ENCODE measurements at regions of chr14 and their contacts with region 1.

Region 1: DNA sequence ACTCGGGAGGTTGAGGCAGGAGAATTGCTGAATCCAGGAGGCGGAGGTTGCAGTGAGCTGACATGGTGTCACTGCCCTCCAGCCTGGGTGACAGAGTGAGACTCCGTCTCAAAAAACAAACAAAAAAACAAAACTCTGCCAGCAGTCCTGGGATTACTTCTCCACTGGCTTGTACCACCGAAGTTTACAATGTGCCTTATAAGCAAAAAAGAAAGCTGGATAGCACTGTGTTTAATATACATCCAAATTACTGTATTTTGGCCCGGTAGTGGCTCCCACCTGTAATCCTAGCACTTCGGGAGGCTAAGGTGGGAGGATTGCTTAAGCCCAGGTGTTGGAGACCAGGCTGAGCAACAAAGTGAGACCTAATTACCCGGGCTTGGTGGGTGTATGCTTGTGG is 16.7 kb downstream of the HOMEZ start:
- DNase-seq: no peak
- ATAC-seq: no peak
- H3K4me3 ChIP-seq: no peak overlapping the region
- H3K27ac ChIP-seq: no peak overlapping the region
- H3K4me1 ChIP-seq: no peaks in the 10 kb centered on the region
- H3K27me3 ChIP-seq: peaks cover 5% of the 10 kb centered on the region; the same call in 1 of the 2 replicates
- CTCF ChIP-seq: no peak

Region 2: DNA sequence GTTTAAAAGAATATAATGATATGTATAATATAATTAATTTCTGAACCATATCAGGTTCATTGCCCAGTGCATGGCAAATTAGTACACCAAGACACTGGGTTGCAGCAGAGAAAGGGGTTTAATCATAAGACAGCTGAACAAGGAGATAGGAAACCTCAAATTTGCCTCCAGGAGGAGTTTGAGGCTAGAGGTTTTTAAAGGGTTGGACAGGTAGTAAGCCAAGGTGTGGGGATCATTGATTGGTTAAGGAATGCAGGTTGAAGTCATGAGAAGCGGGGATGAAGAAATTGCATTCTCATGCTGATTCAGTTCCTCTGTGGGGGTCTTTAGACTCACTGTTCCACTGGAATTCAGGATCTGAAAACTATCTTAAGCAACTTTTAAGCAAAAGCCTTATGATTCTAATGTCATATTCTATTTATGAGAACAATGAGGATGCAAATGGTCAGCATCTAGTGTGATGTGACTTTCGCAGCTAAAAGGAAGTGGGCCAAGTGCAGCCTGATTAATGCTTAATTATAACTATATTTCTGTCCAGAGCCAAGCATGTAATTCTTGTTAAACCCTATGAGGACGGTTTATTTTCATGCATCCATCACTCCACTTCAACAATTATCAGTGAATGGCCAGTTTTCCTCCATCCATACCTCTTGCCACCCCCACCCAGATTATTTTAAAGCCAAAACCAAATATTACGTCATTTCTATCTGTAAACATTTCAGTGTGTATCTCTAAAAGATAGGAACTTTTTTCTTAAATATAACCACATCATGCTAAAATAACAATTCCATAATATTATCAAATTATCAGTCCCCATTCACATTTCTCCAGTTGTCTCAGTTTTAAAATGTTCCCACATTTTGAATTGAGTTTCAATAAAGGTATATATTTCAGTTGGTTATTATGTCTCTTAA is 16.5 kb before region 1 on chr14:
- CTCF ChIA-PET with region 1: no interaction called
- POLR2A ChIA-PET with region 1: no interaction called
- in situ Hi-C with region 1: no loop called
- intact Hi-C with region 1: loop called (anchors 1 kb)
- DNase-seq: no peak
- ATAC-seq: no peak
- H3K4me3 ChIP-seq: no peak overlapping the region
- H3K27ac ChIP-seq: no peak overlapping the region
- H3K4me1 ChIP-seq: no peaks in the 10 kb centered on the region
- H3K27me3 ChIP-seq: peaks cover 5% of the 10 kb centered on the region; the same call in 1 of the 2 replicates
- CTCF ChIP-seq: no peak

Region 3: DNA sequence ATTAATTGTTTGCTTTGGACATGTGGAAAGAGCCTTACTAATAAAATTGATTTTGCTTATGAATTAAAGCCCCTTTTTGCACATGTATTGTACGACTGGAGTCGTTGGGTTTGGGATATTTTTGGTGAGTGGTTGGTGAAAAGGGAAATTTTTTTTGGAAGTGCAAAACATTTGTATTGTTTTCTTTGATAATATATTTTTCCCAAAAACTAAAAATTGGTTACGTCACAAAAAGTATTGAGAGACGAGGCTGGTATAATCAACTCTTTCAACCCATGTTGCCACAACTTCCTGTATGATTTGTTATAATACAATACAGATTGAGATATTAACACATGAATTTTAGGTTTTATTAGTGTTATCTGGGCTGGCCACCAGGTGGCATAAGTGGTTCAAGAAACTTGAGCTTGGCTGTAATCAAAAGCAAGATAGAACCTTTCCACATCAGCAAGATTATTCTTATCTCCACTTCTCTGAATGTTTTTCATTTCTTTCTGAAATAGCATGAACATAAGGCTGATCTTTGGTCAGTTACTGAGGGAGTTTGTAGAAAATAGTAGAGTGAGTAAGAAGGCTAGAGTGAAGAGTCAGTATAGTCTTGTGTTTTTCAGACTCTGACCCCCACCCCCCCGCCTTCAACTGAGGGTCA is 209.0 kb after region 1 on chr14:
- CTCF ChIA-PET with region 1: interaction called, 15 read pairs
- POLR2A ChIA-PET with region 1: no interaction called
- in situ Hi-C with region 1: no loop called
- intact Hi-C with region 1: no loop called
- DNase-seq: peak; percentile 33
- ATAC-seq: no peak
- H3K4me3 ChIP-seq: no peak overlapping the region
- H3K27ac ChIP-seq: no peak overlapping the region
- H3K4me1 ChIP-seq: no peaks in the 10 kb centered on the region
- H3K27me3 ChIP-seq: no peaks in the 10 kb centered on the region
- CTCF ChIP-seq: peak; percentile 60; the same call in 1 of the 2 replicates

Measured in Panc1 (cell line).